Naive thymus-derived CD4-positive, alpha-beta T cell (primary cell): ENCODE measurements at regions of chr6 and their contacts with region 1.

Region 1: GRCh38 chr6:136289579-136290409 is at the start of gene BCLAF1:
- DNase-seq: peak; percentile 98 to 100 (median 100)
- ATAC-seq: peak; percentile 84
- H3K4me3 ChIP-seq: peak within 1 kb of the TSS; percentile 93
- H3K4me3 Mint-ChIP-seq: peak within 1 kb of the TSS; percentile 94 to 100 (median 98)
- H3K27ac ChIP-seq: peak within 1 kb of the TSS; percentile 99
- H3K27ac Mint-ChIP-seq: peak within 1 kb of the TSS; percentile 99 to 100 (median 100)
- H3K4me1 ChIP-seq: peaks cover 35 to 36% of the 10 kb centered on the region in 2 donors
- H3K4me1 Mint-ChIP-seq: peaks cover 19 to 74% (median 58%) of the 10 kb centered on the region in 7 donors
- H3K27me3 ChIP-seq: no peaks in the 10 kb centered on the region
- H3K27me3 Mint-ChIP-seq: peaks cover 0 to 2% (median 0%) of the 10 kb centered on the region in 5 donors
- total RNA-seq, gene BCLAF1: 202 to 439 (median 262) TPM

Region 2: DNA sequence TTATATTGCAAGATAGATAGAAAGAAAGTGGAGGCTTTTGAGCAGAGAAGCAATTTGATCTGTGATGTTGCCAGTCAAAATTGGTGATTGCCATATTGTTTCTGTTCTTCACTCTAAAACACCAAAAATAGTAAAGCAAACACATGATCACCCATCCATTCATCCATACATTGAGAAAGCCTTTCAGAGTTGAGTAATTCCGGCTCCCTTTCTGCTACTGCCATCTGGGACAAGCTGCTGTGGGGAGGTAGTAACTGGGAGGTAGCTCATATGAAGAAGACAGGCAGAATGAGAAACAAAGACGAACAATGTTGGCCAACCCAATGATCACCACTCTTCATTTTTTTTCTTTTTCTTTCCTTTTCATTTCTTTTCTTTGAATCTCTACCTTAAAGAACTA is 1184.1 kb before region 1 on chr6:
- CTCF ChIA-PET with region 1: no interaction called
- POLR2A ChIA-PET with region 1: interaction called, 5 read pairs
- intact Hi-C with region 1: loop called in 1 of 2 experiments (anchors 5 kb)
- DNase-seq: no peak
- ATAC-seq: no peak
- H3K4me3 ChIP-seq: no peak overlapping the region
- H3K4me3 Mint-ChIP-seq: peak overlapping the region in 2 of 10 donors; percentile 8 to 83
- H3K27ac ChIP-seq: no peak overlapping the region
- H3K27ac Mint-ChIP-seq: peak overlapping the region in 8 of 9 donors; percentile 77 to 97 (median 90)
- H3K4me1 ChIP-seq: peaks cover 28 to 45% of the 10 kb centered on the region in 2 donors
- H3K4me1 Mint-ChIP-seq: peaks cover 31 to 83% (median 73%) of the 10 kb centered on the region in 7 donors
- H3K27me3 ChIP-seq: no peaks in the 10 kb centered on the region
- H3K27me3 Mint-ChIP-seq: no peaks in the 10 kb centered on the region

Region 3: GRCh38 chr6:135624402-135625295 is 665.1 kb before region 1 on chr6:
- CTCF ChIA-PET with region 1: no interaction called
- POLR2A ChIA-PET with region 1: no interaction called
- intact Hi-C with region 1: loop called in 1 of 2 experiments (anchors 2 kb)
- DNase-seq: peak in 3 of 9 donors; percentile 1 to 9 (median 7)
- ATAC-seq: no peak
- H3K4me3 ChIP-seq: no peak overlapping the region
- H3K4me3 Mint-ChIP-seq: peak overlapping the region in 2 of 10 donors; percentile 2 to 17
- H3K27ac ChIP-seq: no peak overlapping the region
- H3K27ac Mint-ChIP-seq: peak overlapping the region in 3 of 9 donors; percentile 13 to 91 (median 47)
- H3K4me1 ChIP-seq: no peaks in the 10 kb centered on the region
- H3K4me1 Mint-ChIP-seq: peaks cover 5 to 51% (median 16%) of the 10 kb centered on the region in 7 donors
- H3K27me3 ChIP-seq: no peaks in the 10 kb centered on the region
- H3K27me3 Mint-ChIP-seq: no peaks in the 10 kb centered on the region

Region 4: GRCh38 chr6:136249811-136250685 is 39.7 kb before region 1 on chr6 and contains the start of gene MTFR2:
- CTCF ChIA-PET with region 1: interaction called, 19 read pairs
- POLR2A ChIA-PET with region 1: interaction called, 154 read pairs
- intact Hi-C with region 1: loop called (anchors 1 kb)
- DNase-seq: peak; percentile 74 to 97 (median 93)
- ATAC-seq: peak; percentile 95
- H3K4me3 ChIP-seq: peak within 1 kb of the TSS; percentile 81
- H3K4me3 Mint-ChIP-seq: peak within 1 kb of the TSS; percentile 91 to 99 (median 94)
- H3K27ac ChIP-seq: peak within 1 kb of the TSS; percentile 59
- H3K27ac Mint-ChIP-seq: peak within 1 kb of the TSS; percentile 47 to 89 (median 80)
- H3K4me1 ChIP-seq: peaks cover 7 to 15% of the 10 kb centered on the region in 2 donors
- H3K4me1 Mint-ChIP-seq: peaks cover 6 to 62% (median 43%) of the 10 kb centered on the region in 7 donors
- H3K27me3 ChIP-seq: no peaks in the 10 kb centered on the region
- H3K27me3 Mint-ChIP-seq: no peaks in the 10 kb centered on the region
- total RNA-seq, gene MTFR2: 0.92 to 20.4 (median 1.9) TPM

Region 5: DNA sequence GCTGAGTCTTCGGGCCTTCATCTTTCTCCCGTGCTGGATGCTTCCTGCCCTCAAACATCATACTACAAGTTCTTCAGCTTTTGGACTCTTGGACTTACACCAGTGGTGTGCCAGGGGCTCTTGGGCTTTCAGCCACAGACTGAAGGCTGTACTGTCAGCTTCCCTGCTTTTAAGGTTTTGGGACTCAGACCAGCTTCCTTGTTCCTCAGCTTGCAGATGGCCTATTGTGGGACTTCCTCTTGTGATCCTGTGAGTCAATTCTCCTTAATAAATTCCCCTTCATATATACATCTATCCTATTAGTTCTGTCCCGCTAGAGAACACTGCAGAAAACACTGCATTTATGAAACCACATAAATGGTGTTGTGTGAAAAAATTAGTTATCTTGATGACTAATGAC is 13.7 kb after region 1 on chr6:
- CTCF ChIA-PET with region 1: no interaction called
- POLR2A ChIA-PET with region 1: interaction called, 15 read pairs
- intact Hi-C with region 1: no loop called
- DNase-seq: no peak
- ATAC-seq: no peak
- H3K4me3 ChIP-seq: no peak overlapping the region
- H3K4me3 Mint-ChIP-seq: no peak overlapping the region
- H3K27ac ChIP-seq: no peak overlapping the region
- H3K27ac Mint-ChIP-seq: no peak overlapping the region
- H3K4me1 ChIP-seq: no peaks in the 10 kb centered on the region
- H3K4me1 Mint-ChIP-seq: no peaks in the 10 kb centered on the region
- H3K27me3 ChIP-seq: no peaks in the 10 kb centered on the region
- H3K27me3 Mint-ChIP-seq: peaks cover 0 to 16% (median 4%) of the 10 kb centered on the region in 5 donors

Region 6: GRCh38 chr6:136792410-136793262 is 502.8 kb after region 1 on chr6 and contains the start of gene MAP3K5:
- CTCF ChIA-PET with region 1: interaction called, 5 read pairs
- POLR2A ChIA-PET with region 1: interaction called, 21 read pairs
- intact Hi-C with region 1: loop called (anchors 1 to 2 kb)
- DNase-seq: peak; percentile 89 to 96 (median 94)
- ATAC-seq: peak; percentile 87
- H3K4me3 ChIP-seq: peak within 1 kb of the TSS; percentile 100
- H3K4me3 Mint-ChIP-seq: peak within 1 kb of the TSS; percentile 90 to 97 (median 94)
- H3K27ac ChIP-seq: peak within 1 kb of the TSS; percentile 97
- H3K27ac Mint-ChIP-seq: peak within 1 kb of the TSS; percentile 92 to 99 (median 95)
- H3K4me1 ChIP-seq: peaks cover 13 to 18% of the 10 kb centered on the region in 2 donors
- H3K4me1 Mint-ChIP-seq: peaks cover 19 to 40% (median 35%) of the 10 kb centered on the region in 7 donors
- H3K27me3 ChIP-seq: no peaks in the 10 kb centered on the region
- H3K27me3 Mint-ChIP-seq: peaks cover 0 to 3% (median 0%) of the 10 kb centered on the region in 5 donors
- total RNA-seq, gene MAP3K5: 12.9 to 32.5 (median 14.0) TPM